Activated naive CD8-positive, alpha-beta T cell treated with anti-CD3 and anti-CD28 coated beads, Interleukin-2, amount 10 ng/mL, durations not matched to agents 7 days and 5 days (primary cell): ENCODE measurements at regions of chrX and their contacts with region 1.

Region 1: DNA sequence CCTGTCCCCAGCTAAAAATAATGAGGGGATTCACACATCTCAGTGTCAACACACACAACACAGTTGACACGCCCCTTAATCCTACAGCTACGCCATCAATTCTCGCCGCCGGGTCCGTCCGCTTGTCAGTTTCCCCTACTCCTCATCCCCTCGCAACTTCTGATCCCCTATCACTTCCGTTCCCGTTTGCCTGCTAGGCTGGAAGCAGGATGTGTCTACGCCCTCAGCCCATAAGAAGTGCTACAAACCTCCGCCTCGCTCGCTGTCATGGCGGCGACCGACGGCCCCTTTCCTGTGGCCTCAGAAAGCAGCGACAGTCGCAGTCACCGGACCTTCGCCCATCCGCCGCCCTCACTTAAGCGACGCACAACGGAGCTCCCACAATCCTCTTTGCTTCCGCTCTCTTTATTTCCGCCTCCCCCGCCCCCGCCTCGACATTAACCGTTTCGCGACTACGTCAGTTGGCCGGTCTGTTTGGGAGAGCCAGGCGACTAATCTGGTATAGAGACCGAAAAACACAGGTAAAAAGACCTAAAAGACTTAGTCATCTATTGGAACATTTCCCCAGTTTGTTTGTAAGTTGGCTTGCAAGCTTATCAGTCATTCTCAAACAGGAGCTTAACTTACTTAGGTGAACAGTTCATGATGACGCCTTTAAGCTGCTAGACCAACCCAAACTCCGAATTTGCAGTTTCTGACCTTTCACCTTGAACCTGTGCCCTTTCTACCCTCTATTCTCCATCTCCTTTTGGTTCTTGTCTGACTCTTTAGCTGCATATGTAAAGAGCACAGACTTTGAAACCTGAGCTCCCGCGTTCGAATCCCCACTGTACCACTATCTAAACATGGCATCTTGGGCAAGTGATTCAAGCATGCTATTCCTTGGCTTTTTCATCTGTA is at the start of gene SLC25A53:
- DNase-seq: peak; percentile 78
- ATAC-seq: peak; percentile 91
- H3K4me3 Mint-ChIP-seq: peak within 1 kb of the TSS; percentile 100
- H3K27ac Mint-ChIP-seq: peak within 1 kb of the TSS; percentile 100
- H3K4me1 Mint-ChIP-seq: peaks cover 8% of the 10 kb centered on the region
- H3K27me3 Mint-ChIP-seq: no peaks in the 10 kb centered on the region
- total RNA-seq, gene SLC25A53: 13.9 to 15.0 TPM

Region 2: GRCh38 chrX:103918581-103919269 is 238.2 kb before region 1 on chrX:
- POLR2A ChIA-PET with region 1: interaction called, 11 read pairs
- DNase-seq: peak; percentile 75
- ATAC-seq: peak; percentile 89
- H3K4me3 Mint-ChIP-seq: peak overlapping the region; percentile 95
- H3K27ac Mint-ChIP-seq: peak overlapping the region; percentile 97
- H3K4me1 Mint-ChIP-seq: peaks cover 14% of the 10 kb centered on the region
- H3K27me3 Mint-ChIP-seq: no peaks in the 10 kb centered on the region

Region 3: DNA sequence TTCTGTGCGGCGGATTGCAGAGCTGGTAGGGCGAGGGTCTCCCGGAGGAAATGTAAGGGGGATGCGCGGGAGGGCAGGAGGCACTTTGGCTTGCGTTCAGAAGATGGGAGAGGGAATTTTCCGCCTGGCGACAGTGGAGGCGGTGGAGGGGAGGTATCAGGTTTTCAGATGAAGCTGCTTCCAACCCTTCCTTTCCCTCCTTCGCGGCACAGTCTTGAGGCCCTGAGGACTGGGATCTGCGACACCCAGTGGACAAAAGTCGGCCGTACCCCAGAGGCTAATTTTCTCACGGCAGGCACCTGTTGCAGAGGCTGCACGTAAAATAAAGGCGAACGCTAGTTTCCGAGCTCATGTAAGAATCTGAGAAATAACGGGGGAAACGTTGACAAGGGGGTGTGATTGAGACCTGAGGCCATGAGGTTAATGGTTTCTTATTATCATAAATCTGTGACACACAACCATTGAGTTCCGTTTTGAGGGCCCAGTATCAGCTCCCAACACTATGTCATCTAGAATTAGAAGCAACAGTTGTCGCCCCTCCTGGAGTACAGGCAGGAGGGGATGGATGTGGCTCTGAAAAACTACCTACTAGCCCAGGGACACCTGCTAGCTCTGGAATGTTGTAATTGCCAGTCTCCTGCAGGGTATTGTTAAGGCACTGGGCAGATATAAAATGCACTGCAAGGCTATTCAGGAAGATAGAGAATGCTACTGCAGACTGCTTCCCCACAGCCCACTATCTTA is 43.5 kb before region 1 on chrX:
- POLR2A ChIA-PET with region 1: interaction called, 18 read pairs
- DNase-seq: peak; percentile 49
- ATAC-seq: peak; percentile 41
- H3K4me3 Mint-ChIP-seq: peak overlapping the region; percentile 92
- H3K27ac Mint-ChIP-seq: peak overlapping the region; percentile 93
- H3K4me1 Mint-ChIP-seq: peaks cover 34% of the 10 kb centered on the region
- H3K27me3 Mint-ChIP-seq: no peaks in the 10 kb centered on the region

Region 4: GRCh38 chrX:104172121-104172520 is 15.2 kb after region 1 on chrX:
- POLR2A ChIA-PET with region 1: no interaction called
- DNase-seq: no peak
- ATAC-seq: no peak
- H3K4me3 Mint-ChIP-seq: no peak overlapping the region
- H3K27ac Mint-ChIP-seq: no peak overlapping the region
- H3K4me1 Mint-ChIP-seq: peaks cover 19% of the 10 kb centered on the region
- H3K27me3 Mint-ChIP-seq: no peaks in the 10 kb centered on the region

Region 5: GRCh38 chrX:104284507-104284906 is 127.6 kb after region 1 on chrX:
- POLR2A ChIA-PET with region 1: no interaction called
- DNase-seq: no peak
- ATAC-seq: no peak
- H3K4me3 Mint-ChIP-seq: no peak overlapping the region
- H3K27ac Mint-ChIP-seq: no peak overlapping the region
- H3K4me1 Mint-ChIP-seq: no peaks in the 10 kb centered on the region
- H3K27me3 Mint-ChIP-seq: peaks cover 12% of the 10 kb centered on the region